GM10248 (cell line): ENCODE measurements at regions of chr18 and their contacts with region 1.

Region 1: GRCh38 chr18:55234366-55235093 is 275.3 kb upstream of the CCDC68 start:
- DNase-seq: peak; percentile 54
- CTCF ChIP-seq: peak; percentile 78

Region 2: DNA sequence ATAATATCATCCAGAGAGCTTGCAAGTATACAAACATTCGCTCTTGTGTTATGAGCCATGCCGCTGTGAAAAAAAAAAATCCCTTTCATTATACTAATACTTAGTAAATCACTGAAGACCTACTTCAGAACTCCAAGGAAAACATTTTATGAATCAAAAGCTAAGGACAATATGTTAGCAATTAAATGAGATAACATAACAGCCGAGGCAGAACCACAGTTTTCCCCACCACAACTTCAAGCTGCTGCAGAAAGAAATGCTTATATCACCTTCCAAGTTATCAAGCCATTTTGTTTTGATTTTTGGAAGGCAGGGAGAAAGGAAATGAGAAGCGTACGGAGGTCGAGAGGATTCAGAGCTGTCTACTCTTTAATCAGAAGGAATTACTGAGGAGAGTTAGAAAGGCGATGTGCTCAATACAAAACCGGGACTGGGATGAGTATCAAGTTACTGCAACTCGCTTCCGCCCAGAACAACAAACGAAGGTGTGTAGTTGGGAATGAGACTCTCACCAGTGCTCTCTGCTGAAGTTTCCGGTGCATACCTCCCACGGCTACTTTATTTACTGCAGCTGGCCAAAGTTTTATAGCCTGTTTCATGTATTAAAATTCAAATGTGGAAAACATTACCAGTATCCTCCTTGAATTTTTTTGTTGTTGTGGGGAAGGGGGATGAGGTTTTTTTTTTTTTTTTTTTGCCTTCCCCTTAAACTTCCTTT is 16.9 kb after region 1 on chr18:
- CTCF ChIA-PET with region 1: interaction called, 58 read pairs
- POLR2A ChIA-PET with region 1: no interaction called
- DNase-seq: no peak
- CTCF ChIP-seq: no peak

Region 3: GRCh38 chr18:55275039-55275901 is 40.7 kb after region 1 on chr18:
- CTCF ChIA-PET with region 1: interaction called, 69 read pairs
- POLR2A ChIA-PET with region 1: no interaction called
- DNase-seq: no peak
- CTCF ChIP-seq: no peak

Region 4: DNA sequence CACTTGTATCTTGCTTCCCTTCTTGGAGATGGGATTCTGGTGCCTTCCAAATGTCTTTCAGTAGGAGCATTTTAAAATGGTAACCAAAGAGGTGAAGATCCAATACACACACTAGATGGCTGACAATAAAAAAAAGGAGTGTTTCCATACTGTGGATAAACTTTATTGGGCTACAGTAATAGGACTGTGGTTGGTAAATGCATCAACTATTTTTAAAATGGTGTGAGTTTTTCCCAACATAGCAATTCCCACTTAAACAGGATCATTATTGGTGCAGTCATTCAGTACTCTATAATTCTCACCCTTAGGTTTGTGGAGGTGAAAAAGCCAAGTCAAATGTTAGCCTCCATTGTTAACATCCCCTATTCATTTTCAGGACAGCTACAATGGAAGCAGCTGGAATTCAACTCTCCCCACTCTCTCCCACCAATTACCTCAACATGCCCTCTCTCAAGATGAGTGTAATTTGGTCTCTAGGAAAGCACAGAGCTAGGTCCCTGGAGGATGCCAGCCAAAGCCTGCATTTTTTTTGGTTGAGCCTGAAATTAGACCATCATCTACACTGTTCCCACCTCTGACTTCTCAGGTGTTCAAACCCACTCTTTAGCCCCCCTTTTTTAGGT is 80.2 kb after region 1 on chr18:
- CTCF ChIA-PET with region 1: interaction called, 11 read pairs
- POLR2A ChIA-PET with region 1: no interaction called
- DNase-seq: no peak
- CTCF ChIP-seq: no peak

Region 5: GRCh38 chr18:55334875-55335274 is 100.3 kb after region 1 on chr18:
- CTCF ChIA-PET with region 1: interaction called, 10 read pairs
- POLR2A ChIA-PET with region 1: no interaction called
- DNase-seq: no peak
- CTCF ChIP-seq: no peak

Region 6: GRCh38 chr18:55415258-55415871 is 180.8 kb after region 1 on chr18:
- CTCF ChIA-PET with region 1: interaction called, 22 read pairs
- POLR2A ChIA-PET with region 1: no interaction called
- DNase-seq: peak; percentile 52
- CTCF ChIP-seq: peak; percentile 87

Region 7: DNA sequence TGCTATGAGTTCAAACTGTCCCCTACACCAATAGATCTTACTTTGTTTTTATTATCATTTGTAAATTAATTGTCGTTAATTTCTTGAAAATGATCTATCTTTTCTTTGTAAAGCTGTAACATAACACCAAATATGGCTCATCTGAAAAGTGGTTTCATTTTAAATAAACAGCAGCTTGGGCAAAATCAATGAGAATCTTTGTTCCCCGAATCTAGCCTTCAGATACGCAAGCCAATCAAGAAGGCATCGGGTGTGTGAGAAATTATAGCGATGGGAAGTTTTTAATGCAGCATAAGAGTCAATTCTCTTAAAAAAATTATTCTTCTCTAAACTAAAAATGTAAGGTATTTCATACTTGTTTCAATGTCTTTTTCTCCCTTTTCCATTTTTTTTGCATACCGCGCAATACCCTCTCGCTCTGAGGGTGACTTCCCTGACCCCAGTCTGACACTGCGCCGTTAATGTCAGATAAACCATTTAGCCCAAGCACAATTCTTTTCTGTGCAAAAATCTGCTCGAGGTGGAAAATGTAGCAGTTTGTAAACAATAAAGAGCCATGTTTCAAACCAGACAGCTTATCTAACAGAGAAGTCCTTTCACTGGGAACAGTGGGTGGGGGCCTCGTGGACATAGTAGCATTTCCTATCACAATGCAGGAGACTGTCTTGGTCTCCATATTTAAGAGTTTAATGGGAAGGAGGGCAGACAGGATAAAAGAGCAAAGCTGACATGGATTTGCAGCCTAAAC is 224.1 kb after region 1 on chr18:
- CTCF ChIA-PET with region 1: no interaction called
- POLR2A ChIA-PET with region 1: no interaction called
- DNase-seq: no peak
- CTCF ChIP-seq: no peak